GM12878 (cell line): ENCODE measurements at regions of chr11 and their contacts with region 1.

Region 1: GRCh38 chr11:90310210-90310609 is 87.4 kb upstream of the CHORDC1 start:
- DNase-seq: no peak
- ATAC-seq: no peak
- H3K4me3 ChIP-seq: no peak overlapping the region
- H3K27ac ChIP-seq: no peak overlapping the region
- H3K4me1 ChIP-seq: no peaks in the 10 kb centered on the region
- H3K27me3 ChIP-seq: no peaks in the 10 kb centered on the region
- CTCF ChIP-seq: no peak; a peak in 1 of 6 replicates
- EP300 ChIP-seq: no peak
- POLR2A ChIP-seq: no peak
- RAD21 ChIP-seq: peak; percentile 38

Region 2: DNA sequence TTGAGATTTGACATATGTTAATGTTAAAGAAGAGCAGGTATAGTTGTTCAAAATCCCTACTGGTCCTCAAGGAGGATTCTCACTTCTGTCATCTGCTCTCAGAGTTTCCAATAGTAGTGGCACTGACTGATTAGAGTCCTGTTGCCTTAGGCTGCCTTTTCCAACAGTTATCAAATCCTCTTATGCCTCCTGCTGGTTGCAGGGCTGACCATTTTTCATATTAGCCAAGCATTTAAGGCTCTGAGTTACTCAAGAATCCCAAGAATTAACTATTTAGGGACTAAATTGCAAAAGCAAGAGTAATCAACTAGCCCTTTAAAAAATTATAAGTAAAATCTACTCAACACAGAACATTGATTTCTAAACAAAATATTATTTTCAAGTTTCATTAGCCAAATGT is 124.6 kb after region 1 on chr11:
- CTCF ChIA-PET with region 1: interaction called, 20 read pairs
- POLR2A ChIA-PET with region 1: no interaction called
- RAD21 ChIA-PET with region 1: interaction called, 17 read pairs
- SMC1A ChIA-PET with region 1: interaction called, 13 read pairs
- in situ Hi-C with region 1: no loop called
- intact Hi-C with region 1: no loop called
- DNase-seq: no peak
- ATAC-seq: peak; percentile 38
- H3K4me3 ChIP-seq: no peak overlapping the region
- H3K27ac ChIP-seq: no peak overlapping the region
- H3K4me1 ChIP-seq: no peaks in the 10 kb centered on the region
- H3K27me3 ChIP-seq: no peaks in the 10 kb centered on the region
- CTCF ChIP-seq: peak in 1 of 3 experiments; percentile 38; a peak in 2 of 6 replicates
- EP300 ChIP-seq: no peak
- POLR2A ChIP-seq: no peak
- RAD21 ChIP-seq: peak; percentile 45

Region 3: GRCh38 chr11:90465507-90465906 is 155.3 kb after region 1 on chr11:
- CTCF ChIA-PET with region 1: interaction called, 15 read pairs
- POLR2A ChIA-PET with region 1: no interaction called
- RAD21 ChIA-PET with region 1: interaction called, 11 read pairs
- SMC1A ChIA-PET with region 1: interaction called, 17 read pairs
- in situ Hi-C with region 1: no loop called
- intact Hi-C with region 1: no loop called
- DNase-seq: no peak
- ATAC-seq: no peak
- H3K4me3 ChIP-seq: no peak overlapping the region
- H3K27ac ChIP-seq: no peak overlapping the region
- H3K4me1 ChIP-seq: no peaks in the 10 kb centered on the region
- H3K27me3 ChIP-seq: no peaks in the 10 kb centered on the region
- CTCF ChIP-seq: no peak
- EP300 ChIP-seq: no peak
- POLR2A ChIP-seq: no peak
- RAD21 ChIP-seq: no peak